ENCODE measurements at regions of chr7 and their contacts with region 1.

Region 1: DNA sequence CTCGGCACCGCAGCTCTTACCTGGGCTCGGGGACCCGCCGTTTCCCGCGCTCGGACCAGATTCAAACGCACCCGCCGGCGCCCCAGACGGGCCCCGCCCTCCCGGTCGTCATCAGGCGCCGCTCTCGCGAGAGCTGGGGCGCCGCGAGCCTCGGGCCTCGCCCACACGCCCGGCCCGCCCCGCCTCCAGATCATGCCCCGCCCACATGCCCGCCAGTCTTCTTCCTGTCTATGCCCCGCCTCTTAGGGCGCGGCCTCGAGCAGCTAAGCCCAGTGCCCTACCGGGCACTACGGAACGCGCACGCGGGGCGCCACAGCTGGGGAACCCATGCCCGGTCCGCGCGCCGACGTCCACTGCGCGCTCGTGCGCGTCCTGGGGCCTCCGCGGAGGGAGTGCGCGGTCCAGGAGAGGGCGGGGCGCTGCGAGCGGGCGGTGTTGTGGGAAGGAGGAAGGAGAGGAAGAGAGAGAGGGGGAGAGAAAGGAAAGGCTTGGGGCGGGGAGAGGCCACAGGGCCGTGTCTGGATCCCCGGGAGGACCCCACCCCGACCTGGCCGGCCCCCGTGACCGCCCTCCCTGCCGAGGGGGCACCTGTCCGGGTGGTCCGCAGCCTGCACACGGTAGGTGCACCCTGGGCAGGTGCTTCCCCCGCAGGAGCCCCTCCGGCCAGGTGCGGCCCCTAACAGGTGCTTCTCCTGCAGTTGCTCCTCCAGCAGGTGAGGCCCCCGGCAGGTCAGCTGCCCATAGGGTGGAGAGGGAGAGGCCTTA is at the start of gene NCAPG2:
- DNase-seq: peak; percentile 99
- H3K4me3 ChIP-seq: peak within 1 kb of the TSS; percentile 48 to 94 (median 70)
- H3K27ac ChIP-seq: peak within 1 kb of the TSS; percentile 89 to 90 (median 90)
- H3K4me1 ChIP-seq: peaks cover 0 to 18% (median 13%) of the 10 kb centered on the region in 4 donors
- H3K27me3 ChIP-seq: no peaks in the 10 kb centered on the region
- CTCF ChIP-seq: peak; percentile 35 to 59 (median 39)
- EP300 ChIP-seq: no peak
- POLR2A ChIP-seq: peak; percentile 76 to 92
- total RNA-seq, gene NCAPG2: 3.0 to 7.1 (median 5.1) TPM

Region 2: DNA sequence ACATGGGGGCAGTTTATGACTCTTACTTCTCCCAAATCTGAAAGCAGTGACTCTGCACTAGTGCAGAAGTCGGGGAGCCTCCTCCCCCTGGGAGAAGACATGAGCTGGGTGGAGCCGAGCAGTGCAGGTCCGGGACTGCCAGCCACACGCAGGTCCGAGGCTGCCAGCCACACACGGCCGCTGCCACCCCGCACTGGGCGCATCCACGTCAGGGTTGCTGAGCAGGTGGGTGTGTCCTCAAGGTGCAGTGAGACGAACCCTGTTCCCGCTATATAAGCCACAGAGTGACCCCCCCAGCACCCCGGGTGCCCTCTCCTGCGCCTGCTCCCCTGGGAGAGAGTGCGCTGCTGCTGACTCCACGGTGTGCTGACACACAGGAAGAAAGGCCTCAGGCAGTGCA is 547.4 kb before region 1 on chr7:
- intact Hi-C with region 1: no loop called
- DNase-seq: no peak
- H3K4me3 ChIP-seq: no peak overlapping the region
- H3K27ac ChIP-seq: no peak overlapping the region
- H3K4me1 ChIP-seq: no peaks in the 10 kb centered on the region
- H3K27me3 ChIP-seq: no peaks in the 10 kb centered on the region
- CTCF ChIP-seq: no peak
- EP300 ChIP-seq: no peak
- POLR2A ChIP-seq: no peak

Region 3: GRCh38 chr7:158723266-158723665 is 18.4 kb after region 1 on chr7:
- intact Hi-C with region 1: no loop called
- DNase-seq: no peak
- H3K4me3 ChIP-seq: no peak overlapping the region
- H3K27ac ChIP-seq: no peak overlapping the region
- H3K4me1 ChIP-seq: no peaks in the 10 kb centered on the region
- H3K27me3 ChIP-seq: no peaks in the 10 kb centered on the region
- CTCF ChIP-seq: no peak
- EP300 ChIP-seq: no peak
- POLR2A ChIP-seq: no peak

Region 4: DNA sequence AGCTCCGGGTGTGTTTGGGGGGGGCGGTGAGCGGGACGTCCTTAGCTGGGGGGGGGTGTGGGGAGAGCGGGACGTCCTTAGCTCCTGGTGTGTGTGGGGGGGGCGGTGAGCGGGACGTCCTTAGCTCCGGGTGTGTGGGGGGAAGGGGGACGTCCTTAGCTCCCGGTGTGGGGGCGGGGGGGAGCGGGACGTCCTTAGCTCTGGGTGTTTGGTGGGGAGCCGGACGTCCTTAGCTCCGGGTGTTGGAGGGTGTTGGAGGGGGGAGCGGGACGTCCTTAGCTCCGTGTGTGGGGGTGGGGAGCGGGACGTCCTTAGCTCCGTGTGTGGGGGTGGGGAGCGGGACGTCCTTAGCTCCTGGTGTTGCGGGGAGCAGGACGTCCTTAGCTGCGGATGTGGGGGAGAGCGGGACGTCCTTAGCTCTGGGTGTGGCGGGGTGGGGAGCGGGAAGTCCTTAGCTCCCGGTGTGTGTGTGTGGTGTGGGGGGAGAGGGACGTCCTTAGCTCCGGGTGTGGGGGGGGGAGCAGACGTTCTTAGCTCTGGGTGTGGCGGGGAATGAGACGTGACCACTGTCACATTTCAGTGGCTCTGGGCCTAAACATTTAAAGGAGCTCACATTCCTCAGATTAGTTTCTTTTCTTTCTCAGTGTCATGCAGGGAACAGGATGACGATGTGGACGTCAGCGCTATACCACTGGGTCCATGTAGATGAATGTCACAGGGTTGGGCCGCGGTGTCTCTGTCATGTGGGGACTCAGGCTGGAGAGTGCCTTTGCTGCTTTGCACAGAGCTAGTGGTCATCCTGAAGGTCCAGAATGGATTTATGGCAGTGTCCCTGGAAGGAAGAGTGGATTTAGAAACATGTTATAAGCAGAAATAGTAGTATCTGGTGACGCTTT is 159.0 kb after region 1 on chr7:
- intact Hi-C with region 1: loop called (anchors 5 kb)
- DNase-seq: peak; percentile 91
- H3K4me3 ChIP-seq: peak overlapping the region; percentile 43 to 65 (median 54)
- H3K27ac ChIP-seq: peak overlapping the region; percentile 83 to 87 (median 86)
- H3K4me1 ChIP-seq: peaks cover 0 to 43% (median 13%) of the 10 kb centered on the region in 4 donors
- H3K27me3 ChIP-seq: no peaks in the 10 kb centered on the region
- CTCF ChIP-seq: no peak
- EP300 ChIP-seq: peak in 1 of 4 donors; percentile 21
- POLR2A ChIP-seq: peak in 1 of 2 donors; percentile 20

Region 5: GRCh38 chr7:159237048-159237653 is 532.3 kb after region 1 on chr7:
- intact Hi-C with region 1: no loop called
- DNase-seq: no peak
- H3K4me3 ChIP-seq: no peak overlapping the region
- H3K27ac ChIP-seq: peak overlapping the region in 2 of 4 donors; percentile 42 to 47
- H3K4me1 ChIP-seq: no peaks in the 10 kb centered on the region
- H3K27me3 ChIP-seq: no peaks in the 10 kb centered on the region
- CTCF ChIP-seq: no peak
- EP300 ChIP-seq: no peak
- POLR2A ChIP-seq: no peak